Aorta (tissue), 5 donors: ENCODE measurements at regions of chrX and their contacts with region 1.

Region 1: DNA sequence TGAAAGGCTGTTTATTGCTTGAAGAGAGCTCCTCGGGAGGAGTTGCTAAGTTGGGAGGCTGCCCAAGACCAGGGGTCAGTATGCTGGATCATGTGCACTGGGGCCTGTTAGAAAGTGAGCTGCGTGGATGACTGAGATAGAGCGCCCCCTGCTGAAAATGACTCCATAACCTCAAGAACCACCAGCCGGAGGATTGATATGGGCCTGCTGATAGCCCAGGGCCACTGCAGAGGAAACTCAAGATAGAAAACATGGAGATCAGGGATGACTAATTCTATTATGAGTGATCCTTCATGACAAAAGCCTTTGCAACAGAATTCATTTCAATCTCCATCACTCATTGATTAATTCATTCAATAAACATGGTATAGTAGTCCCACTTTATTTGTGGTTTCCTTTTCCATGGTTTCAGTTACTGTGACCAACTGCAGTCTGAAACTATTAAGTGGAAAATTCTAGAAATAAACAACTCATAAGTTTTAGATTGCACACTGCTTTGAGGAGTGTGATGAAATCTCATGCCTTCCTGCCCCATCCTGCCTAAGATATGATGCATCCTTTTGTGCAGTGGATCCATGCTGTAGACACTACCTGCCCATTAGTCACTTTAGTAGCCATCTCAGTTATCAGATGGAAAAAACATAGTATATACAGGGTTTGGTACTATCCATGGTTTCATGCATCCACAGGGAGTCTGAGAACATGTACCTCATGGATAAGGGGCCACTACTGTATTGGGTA is 126.7 kb upstream of the MBNL3 start:
- DNase-seq: peak in 1 of 2 donors; percentile 55
- ATAC-seq: no peak
- H3K4me3 ChIP-seq: no peak overlapping the region
- H3K27ac ChIP-seq: no peak overlapping the region
- H3K4me1 ChIP-seq: no peaks in the 10 kb centered on the region
- H3K27me3 ChIP-seq: peaks cover 0 to 3% of the 10 kb centered on the region in 2 donors

Region 2: DNA sequence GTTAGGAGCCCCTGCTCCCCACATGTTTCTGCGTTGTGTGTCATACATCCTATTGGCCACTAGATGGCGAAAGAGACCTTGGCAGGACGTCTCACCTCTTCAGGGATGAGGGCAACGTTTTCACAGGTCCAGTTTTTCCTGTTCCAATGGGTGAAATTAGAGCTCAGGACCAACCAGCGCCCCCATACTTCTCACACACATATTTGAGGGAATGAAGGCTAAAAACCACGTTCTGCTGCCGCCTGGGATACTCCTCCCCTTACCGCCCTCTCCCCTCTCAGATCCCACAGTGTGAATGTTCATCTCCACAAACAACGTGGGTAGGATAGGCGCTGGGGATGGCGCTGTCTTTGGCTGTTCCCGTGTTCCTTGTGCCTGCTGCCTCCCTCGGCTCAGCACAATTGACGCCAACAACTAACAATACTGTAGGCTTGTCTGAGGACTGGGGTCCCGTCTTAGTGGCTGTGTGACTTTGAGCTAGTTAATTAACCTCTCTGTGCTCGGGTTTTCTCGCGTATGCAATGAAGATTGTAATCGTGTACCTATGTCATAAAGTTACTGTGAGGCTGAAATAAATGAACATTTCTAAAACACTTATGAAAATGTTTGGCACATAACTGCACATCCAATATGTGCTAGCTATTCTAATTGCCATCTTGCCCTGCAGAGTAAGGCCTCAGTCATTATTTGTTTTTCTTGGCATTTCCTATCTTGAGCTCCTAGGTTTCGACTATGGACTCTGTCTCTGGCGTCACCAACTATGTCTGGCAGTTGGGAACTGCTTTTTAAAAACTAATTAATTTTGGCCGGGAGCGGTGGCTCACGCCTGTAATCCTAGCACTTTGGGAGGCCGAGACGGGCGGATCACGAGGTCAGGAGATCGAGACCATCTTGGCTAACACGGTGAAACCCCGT is 773.8 kb before region 1 on chrX:
- intact Hi-C with region 1: loop called (anchors 10 kb)
- DNase-seq: no peak
- ATAC-seq: no peak
- H3K4me3 ChIP-seq: no peak overlapping the region
- H3K27ac ChIP-seq: no peak overlapping the region
- H3K4me1 ChIP-seq: no peaks in the 10 kb centered on the region
- H3K27me3 ChIP-seq: no peaks in the 10 kb centered on the region

Region 3: DNA sequence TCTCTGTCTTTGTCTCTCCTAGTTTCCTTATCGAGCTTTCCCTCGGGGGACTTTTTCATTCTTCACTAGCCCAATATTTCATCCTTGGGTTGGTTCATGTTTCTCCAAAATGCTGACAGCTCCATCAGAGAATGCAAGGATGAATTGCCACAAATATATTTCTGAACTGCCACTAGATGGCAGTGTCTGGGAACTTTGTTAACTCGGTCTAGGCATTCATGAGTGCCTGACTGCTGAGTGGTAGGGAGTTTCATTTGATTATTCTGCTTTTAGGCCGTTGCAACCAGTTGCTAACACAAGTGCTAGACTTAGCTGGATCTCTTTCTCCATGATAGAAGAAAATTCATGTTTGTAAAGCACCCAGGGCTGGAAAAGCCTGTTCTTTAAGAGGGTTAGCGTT is 322.8 kb before region 1 on chrX:
- intact Hi-C with region 1: loop called in 1 of 2 experiments (anchors 5 kb)
- DNase-seq: no peak
- ATAC-seq: no peak
- H3K4me3 ChIP-seq: no peak overlapping the region
- H3K27ac ChIP-seq: no peak overlapping the region
- H3K4me1 ChIP-seq: no peaks in the 10 kb centered on the region
- H3K27me3 ChIP-seq: no peaks in the 10 kb centered on the region